AG04449 (cell line): ENCODE measurements at regions of chr16 and their contacts with region 1.

Region 1: GRCh38 chr16:19179546-19180490 is 11.8 kb downstream of the SYT17 start:
- DNase-seq: no peak
- H3K4me3 ChIP-seq: no peak overlapping the region
- CTCF ChIP-seq: peak; percentile 63

Region 2: GRCh38 chr16:19113453-19114351 is 66.1 kb before region 1 on chr16 and contains the start of gene ITPRIPL2:
- CTCF ChIA-PET with region 1: interaction called, 12 read pairs
- POLR2A ChIA-PET with region 1: interaction called, 4 read pairs
- DNase-seq: no peak
- H3K4me3 ChIP-seq: peak within 1 kb of the TSS; percentile 75
- CTCF ChIP-seq: no peak

Region 3: GRCh38 chr16:19118938-19119431 is 60.8 kb before region 1 on chr16:
- CTCF ChIA-PET with region 1: interaction called, 12 read pairs
- POLR2A ChIA-PET with region 1: interaction called, 4 read pairs
- DNase-seq: peak; percentile 72
- H3K4me3 ChIP-seq: peak overlapping the region; percentile 64
- CTCF ChIP-seq: no peak

Region 4: DNA sequence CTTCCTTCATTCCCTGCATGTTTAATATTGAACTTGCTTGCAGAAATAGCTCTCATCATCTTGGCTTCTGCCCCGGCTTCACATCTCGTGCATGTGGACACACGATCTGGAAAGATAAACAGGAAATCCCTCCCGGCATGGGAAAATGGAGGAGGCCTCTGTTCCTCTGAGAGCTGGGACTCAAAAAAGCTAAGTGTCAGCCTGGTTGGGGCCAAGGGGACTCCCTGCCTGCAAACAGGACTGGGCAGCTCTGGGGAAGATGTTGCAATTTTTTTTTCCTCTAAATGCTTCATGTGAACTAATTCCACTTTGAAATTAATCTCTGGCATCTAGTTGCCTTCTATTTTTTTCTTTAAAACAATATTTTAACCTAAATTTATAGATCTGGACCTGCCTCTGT is 41.2 kb before region 1 on chr16:
- CTCF ChIA-PET with region 1: interaction called, 10 read pairs
- POLR2A ChIA-PET with region 1: no interaction called
- DNase-seq: no peak
- H3K4me3 ChIP-seq: no peak overlapping the region
- CTCF ChIP-seq: no peak

Region 5: GRCh38 chr16:19203374-19204031 is 23.7 kb after region 1 on chr16:
- CTCF ChIA-PET with region 1: no interaction called
- POLR2A ChIA-PET with region 1: no interaction called
- DNase-seq: no peak
- H3K4me3 ChIP-seq: no peak overlapping the region
- CTCF ChIP-seq: no peak

Region 6: DNA sequence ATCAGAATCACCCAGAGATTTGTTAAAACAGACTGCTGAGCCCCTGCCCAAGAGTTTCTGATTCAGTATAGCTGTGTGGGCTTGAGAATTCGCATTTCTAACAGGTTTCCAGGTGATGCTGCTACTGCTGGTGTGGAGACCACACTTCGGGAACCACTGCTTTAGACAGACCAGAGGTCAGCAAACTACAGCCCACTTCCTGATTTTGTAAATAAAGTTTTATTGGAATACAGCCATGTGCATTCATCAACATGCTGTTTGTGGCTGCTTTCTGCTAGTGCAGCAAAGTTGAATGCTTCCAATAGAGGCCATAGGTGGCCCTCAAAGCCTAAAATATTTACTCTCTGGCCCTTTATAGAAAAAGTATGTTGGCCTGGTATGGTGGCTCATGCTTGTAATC is 73.1 kb after region 1 on chr16:
- CTCF ChIA-PET with region 1: no interaction called
- POLR2A ChIA-PET with region 1: no interaction called
- DNase-seq: no peak
- H3K4me3 ChIP-seq: no peak overlapping the region
- CTCF ChIP-seq: no peak